Activated CD4-positive, alpha-beta memory T cell treated with anti-CD3 and anti-CD28 coated beads for 36 hours (primary cell): ENCODE measurements at regions of chr3 and their contacts with region 1.

Region 1: GRCh38 chr3:48898383-48899234 is at the start of gene SLC25A20:
- DNase-seq: peak; percentile 96
- H3K4me3 Mint-ChIP-seq: peak within 1 kb of the TSS; percentile 97
- H3K27ac Mint-ChIP-seq: peak within 1 kb of the TSS; percentile 92
- H3K4me1 Mint-ChIP-seq: peaks cover 35% of the 10 kb centered on the region
- H3K27me3 Mint-ChIP-seq: no peaks in the 10 kb centered on the region
- total RNA-seq, gene SLC25A20: 16.7 to 18.2 TPM

Region 2: DNA sequence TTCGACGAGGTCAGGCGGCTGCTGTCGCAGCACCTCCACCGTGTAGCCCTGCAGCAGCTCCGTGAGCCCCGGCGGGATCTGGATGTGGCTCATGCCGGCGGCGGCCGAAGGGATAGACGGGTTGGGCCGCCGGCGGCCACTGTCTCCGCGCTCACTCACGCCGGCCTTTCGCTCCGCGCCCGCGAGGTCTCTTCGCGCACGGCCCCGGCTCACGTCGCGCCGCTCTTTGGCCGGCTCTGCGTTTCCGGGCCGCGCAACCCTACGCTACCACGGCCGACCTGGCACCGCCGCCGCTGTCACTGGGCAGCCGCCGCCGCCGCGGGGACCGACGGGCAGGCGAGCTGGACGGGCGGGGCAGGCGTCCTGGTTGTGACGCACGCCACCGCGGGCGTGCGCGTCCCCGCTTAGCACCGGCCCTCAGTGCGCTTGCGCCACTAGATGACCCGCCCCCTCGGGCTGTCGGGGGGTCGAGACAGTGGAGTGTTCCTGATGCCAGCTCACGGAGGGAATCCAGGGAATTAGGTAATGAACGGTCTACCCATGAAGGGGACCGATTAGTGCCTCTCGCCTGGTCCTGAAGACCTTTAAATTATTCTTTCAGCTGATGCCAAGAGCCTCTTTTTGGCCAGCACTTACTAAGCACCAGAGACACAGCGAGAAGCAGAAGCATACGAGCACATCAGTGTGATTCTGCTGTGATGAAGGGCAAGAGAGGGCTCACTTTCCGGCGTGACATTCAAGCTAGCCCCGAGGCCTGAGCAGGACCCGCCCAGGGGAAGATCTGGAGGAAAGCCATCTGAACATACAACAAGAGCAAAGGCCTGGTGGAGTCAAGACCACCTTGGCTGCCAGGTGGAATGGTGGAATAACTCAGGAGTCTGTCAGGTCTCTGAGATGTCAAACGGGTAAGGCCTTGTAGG is 50.8 kb before region 1 on chr3 and contains the start of gene PRKAR2A:
- CTCF ChIA-PET with region 1: no interaction called
- POLR2A ChIA-PET with region 1: interaction called, 3 read pairs
- intact Hi-C with region 1: loop called (anchors 5 kb)
- DNase-seq: peak; percentile 89
- H3K4me3 Mint-ChIP-seq: peak within 1 kb of the TSS; percentile 83
- H3K27ac Mint-ChIP-seq: peak within 1 kb of the TSS; percentile 89
- H3K4me1 Mint-ChIP-seq: peaks cover 28% of the 10 kb centered on the region
- H3K27me3 Mint-ChIP-seq: no peaks in the 10 kb centered on the region
- total RNA-seq, gene PRKAR2A: 30.4 to 32.7 TPM

Region 3: GRCh38 chr3:48877671-48878070 is 20.9 kb before region 1 on chr3:
- CTCF ChIA-PET with region 1: no interaction called
- POLR2A ChIA-PET with region 1: no interaction called
- intact Hi-C with region 1: no loop called
- DNase-seq: no peak
- H3K4me3 Mint-ChIP-seq: no peak overlapping the region
- H3K27ac Mint-ChIP-seq: no peak overlapping the region
- H3K4me1 Mint-ChIP-seq: no peaks in the 10 kb centered on the region
- H3K27me3 Mint-ChIP-seq: no peaks in the 10 kb centered on the region

Region 4: DNA sequence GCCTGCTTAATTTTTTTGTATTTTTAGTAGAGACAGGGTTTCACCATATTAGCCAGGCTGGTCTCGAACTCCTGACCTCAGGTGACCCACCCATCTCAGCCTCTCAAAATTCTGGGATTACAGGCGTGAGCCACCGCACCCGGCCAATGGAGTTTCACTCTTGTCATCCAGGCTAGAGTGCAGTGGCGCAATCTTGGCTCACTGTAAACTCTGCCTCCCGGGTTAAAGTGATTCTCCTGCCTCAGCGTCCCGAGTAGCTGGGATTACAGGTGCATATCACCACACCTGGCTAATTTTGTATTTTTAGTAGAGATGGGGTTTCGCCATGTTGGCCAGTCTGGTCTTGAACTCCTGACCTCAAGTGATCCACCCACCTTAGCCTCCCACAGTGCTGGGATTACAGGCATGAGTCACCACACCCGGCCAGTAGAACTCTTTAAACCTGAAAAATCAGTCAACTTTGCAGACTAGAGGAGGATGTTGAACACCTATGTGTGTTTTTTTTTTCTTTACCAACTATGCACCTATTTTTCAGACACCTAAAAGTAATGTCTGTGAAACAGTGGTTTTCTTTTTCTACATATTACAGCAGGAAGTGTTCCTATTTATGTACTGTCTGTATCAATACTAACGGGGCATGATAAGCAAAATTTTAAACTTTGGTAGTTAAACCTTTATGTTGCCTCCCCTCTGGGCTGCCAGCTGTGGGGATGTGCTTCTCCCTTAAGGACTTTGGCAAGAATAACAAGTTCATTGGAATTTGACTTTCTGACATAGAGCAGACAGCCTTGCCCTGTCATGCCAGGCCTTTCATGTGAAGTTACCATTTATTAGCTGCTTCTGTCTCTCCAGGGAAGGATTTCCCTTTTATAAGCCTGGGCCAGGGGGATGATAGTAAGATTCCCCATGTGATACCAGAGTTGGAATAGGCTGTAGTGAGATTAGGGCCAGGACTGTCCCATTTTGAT is 28.1 kb after region 1 on chr3:
- CTCF ChIA-PET with region 1: interaction called, 3 read pairs
- POLR2A ChIA-PET with region 1: interaction called, 8 read pairs
- intact Hi-C with region 1: loop called (anchors 2 kb)
- DNase-seq: peak; percentile 68
- H3K4me3 Mint-ChIP-seq: peak overlapping the region; percentile 43
- H3K27ac Mint-ChIP-seq: peak overlapping the region; percentile 88
- H3K4me1 Mint-ChIP-seq: peaks cover 63% of the 10 kb centered on the region
- H3K27me3 Mint-ChIP-seq: no peaks in the 10 kb centered on the region

Region 5: DNA sequence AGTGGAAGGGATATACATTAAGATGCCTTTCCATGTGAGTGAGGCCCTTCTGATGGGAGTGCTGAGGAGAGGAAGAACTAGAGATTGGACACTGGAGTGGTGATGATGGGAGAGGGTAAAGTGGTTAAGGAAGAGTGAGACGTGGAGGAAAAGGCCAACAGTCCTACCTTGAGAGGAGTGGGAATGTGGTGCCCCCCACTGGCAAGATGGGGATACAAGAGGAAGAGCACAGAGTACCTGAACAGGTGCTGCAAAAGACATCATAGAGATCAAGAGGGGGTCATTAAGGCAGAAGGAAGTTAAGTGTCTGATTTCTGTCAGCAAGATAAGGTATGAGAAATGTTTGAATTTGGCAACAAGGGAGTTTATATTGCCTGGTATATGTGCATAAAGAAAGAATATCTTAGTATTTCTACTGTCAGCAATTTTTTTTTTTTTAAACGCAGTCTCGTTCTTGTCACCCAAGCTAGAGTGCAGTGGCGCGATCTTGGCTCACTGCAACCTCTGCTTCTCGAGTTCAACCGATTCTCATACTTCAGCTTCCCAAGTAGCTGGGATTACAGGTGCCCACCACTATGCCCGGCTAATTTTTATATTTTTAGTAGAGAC is 54.0 kb after region 1 on chr3:
- CTCF ChIA-PET with region 1: interaction called, 14 read pairs
- POLR2A ChIA-PET with region 1: no interaction called
- intact Hi-C with region 1: no loop called
- DNase-seq: peak; percentile 66
- H3K4me3 Mint-ChIP-seq: no peak overlapping the region
- H3K27ac Mint-ChIP-seq: no peak overlapping the region
- H3K4me1 Mint-ChIP-seq: peaks cover 18% of the 10 kb centered on the region
- H3K27me3 Mint-ChIP-seq: no peaks in the 10 kb centered on the region